Gastrocnemius medialis (tissue), 4 donors: ENCODE measurements at regions of chrX and their contacts with region 1.

Region 1: GRCh38 chrX:38919202-38919601 is 117.9 kb downstream of the MID1IP1 start:
- DNase-seq: no peak
- ATAC-seq: no peak
- H3K4me3 ChIP-seq: no peak overlapping the region
- H3K27ac ChIP-seq: no peak overlapping the region
- H3K4me1 ChIP-seq: peaks cover 0 to 11% of the 10 kb centered on the region in 2 donors
- H3K27me3 ChIP-seq: no peaks in the 10 kb centered on the region
- CTCF ChIP-seq: no peak
- POLR2A ChIP-seq: no peak

Region 2: GRCh38 chrX:38868941-38869401 is 50.2 kb before region 1 on chrX:
- in situ Hi-C with region 1: no loop called
- intact Hi-C with region 1: loop called (anchors 5 kb)
- DNase-seq: peak; percentile 38 to 61
- ATAC-seq: peak; percentile 82
- H3K4me3 ChIP-seq: no peak overlapping the region
- H3K27ac ChIP-seq: peak overlapping the region; percentile 76 to 85 (median 83)
- H3K4me1 ChIP-seq: peaks cover 10 to 22% of the 10 kb centered on the region in 2 donors
- H3K27me3 ChIP-seq: no peaks in the 10 kb centered on the region
- CTCF ChIP-seq: no peak
- POLR2A ChIP-seq: no peak

Region 3: DNA sequence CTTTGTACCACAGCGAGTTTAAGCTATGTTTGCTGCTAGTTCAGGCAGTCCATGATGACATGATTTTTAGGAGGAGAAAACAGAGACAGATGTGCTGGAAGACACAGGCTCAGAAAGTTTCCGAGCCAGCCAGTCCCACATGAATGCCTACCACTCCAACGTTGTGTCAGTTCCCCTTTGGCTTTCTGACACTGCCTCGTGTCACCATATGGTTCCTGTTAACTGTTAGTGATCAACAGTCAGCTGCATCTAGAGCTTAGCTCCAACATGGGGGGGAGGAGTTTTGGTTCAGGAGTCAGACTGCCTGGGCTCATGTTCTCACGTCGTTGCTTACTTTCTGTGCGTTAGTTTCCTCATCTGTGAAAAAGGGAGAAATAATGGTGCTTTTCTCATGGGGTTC is 225.8 kb after region 1 on chrX:
- in situ Hi-C with region 1: no loop called
- intact Hi-C with region 1: no loop called
- DNase-seq: no peak
- ATAC-seq: peak in 1 of 2 donors; percentile 6
- H3K4me3 ChIP-seq: no peak overlapping the region
- H3K27ac ChIP-seq: no peak overlapping the region
- H3K4me1 ChIP-seq: peaks cover 4 to 17% of the 10 kb centered on the region in 2 donors
- H3K27me3 ChIP-seq: no peaks in the 10 kb centered on the region
- CTCF ChIP-seq: no peak
- POLR2A ChIP-seq: no peak

Region 4: DNA sequence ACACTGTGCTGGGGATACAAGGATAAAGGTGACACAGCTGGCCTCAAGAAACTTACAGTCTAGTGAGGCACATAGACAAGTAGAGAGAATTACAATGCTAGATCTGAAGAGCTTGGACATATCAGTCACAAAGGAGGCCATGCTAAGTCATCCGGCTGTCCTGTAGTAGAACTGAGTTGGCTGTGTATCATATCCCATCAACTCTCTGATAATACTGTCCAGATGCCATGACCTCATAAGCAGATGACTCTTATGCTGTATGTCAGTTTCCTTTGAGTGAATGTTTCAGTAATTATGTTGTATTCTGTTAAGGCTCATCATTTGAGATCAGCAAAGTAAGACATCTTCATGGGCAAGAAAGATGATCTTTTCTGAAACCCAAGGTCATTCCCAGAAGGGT is 324.9 kb after region 1 on chrX:
- in situ Hi-C with region 1: no loop called
- intact Hi-C with region 1: no loop called
- DNase-seq: no peak
- ATAC-seq: no peak
- H3K4me3 ChIP-seq: no peak overlapping the region
- H3K27ac ChIP-seq: no peak overlapping the region
- H3K4me1 ChIP-seq: no peaks in the 10 kb centered on the region
- H3K27me3 ChIP-seq: no peaks in the 10 kb centered on the region
- CTCF ChIP-seq: no peak
- POLR2A ChIP-seq: no peak